CD8-positive, alpha-beta T cell (primary cell): ENCODE measurements at regions of chr3 and their contacts with region 1.

Region 1: DNA sequence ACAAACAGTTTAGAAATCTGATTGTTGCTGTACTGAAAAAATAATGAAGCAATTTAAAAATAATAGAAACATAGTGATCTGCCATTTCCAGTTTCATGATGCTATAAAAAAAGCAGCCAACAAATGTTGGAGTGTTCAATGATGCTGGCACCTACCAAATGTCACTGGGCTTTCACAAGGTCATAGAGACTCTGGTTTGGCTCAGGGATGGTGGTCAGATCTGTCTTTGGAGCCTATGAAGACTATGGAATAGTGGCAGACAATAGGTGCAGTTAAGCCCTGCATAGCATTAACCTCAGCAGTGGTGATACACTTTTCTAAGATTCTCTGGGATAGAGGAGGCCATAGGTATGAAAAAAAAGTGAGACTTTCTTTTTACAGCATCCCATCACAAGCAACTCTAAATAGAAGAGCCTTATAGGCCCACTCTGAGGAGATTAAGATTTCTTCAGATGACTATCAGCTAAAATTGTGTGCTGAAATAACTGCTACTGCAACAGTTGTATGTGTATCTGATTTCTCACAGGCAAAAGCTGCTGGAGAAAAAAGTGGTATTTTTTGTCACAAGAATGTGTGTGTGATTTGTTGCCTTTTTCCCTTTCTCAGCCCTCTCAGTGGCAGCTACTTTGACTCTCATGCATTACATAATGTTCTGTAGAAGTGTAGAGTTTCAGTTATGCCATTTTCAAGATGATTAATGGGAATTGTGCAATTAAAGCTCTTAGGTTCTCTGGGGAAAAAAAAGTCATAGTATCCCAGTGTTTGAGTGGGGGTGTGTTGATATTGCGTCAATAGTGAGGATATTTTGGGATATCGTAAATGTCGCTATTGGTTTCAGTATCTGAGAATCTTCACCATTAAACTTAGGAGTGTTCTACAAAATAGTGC is 137.4 kb downstream of the MBNL1 start:
- DNase-seq: no peak
- ATAC-seq: no peak
- H3K4me3 ChIP-seq: no peak overlapping the region
- H3K4me3 Mint-ChIP-seq: no peak overlapping the region
- H3K27ac ChIP-seq: peak overlapping the region in 1 of 2 experiments; percentile 1
- H3K27ac Mint-ChIP-seq: peak overlapping the region; percentile 69
- H3K4me1 ChIP-seq: peaks cover 51% of the 10 kb centered on the region
- H3K4me1 Mint-ChIP-seq: peaks cover 81% of the 10 kb centered on the region
- H3K27me3 ChIP-seq: no peaks in the 10 kb centered on the region
- H3K27me3 Mint-ChIP-seq: no peaks in the 10 kb centered on the region
- CTCF ChIP-seq: no peak

Region 2: GRCh38 chr3:152331018-152331541 is 75.1 kb before region 1 on chr3:
- CTCF ChIA-PET with region 1: no interaction called
- POLR2A ChIA-PET with region 1: no interaction called
- intact Hi-C with region 1: loop called in 1 of 2 experiments (anchors 5 kb)
- DNase-seq: no peak
- ATAC-seq: no peak
- H3K4me3 ChIP-seq: no peak overlapping the region
- H3K4me3 Mint-ChIP-seq: peak overlapping the region; percentile 6
- H3K27ac ChIP-seq: no peak overlapping the region
- H3K27ac Mint-ChIP-seq: peak overlapping the region; percentile 77
- H3K4me1 ChIP-seq: peaks cover 74% of the 10 kb centered on the region
- H3K4me1 Mint-ChIP-seq: peaks cover 88% of the 10 kb centered on the region
- H3K27me3 ChIP-seq: no peaks in the 10 kb centered on the region
- H3K27me3 Mint-ChIP-seq: no peaks in the 10 kb centered on the region
- CTCF ChIP-seq: no peak

Region 3: GRCh38 chr3:152385761-152386160 is 20.4 kb before region 1 on chr3:
- CTCF ChIA-PET with region 1: no interaction called
- POLR2A ChIA-PET with region 1: no interaction called
- intact Hi-C with region 1: loop called (anchors 2 kb)
- DNase-seq: no peak
- ATAC-seq: no peak
- H3K4me3 ChIP-seq: no peak overlapping the region
- H3K4me3 Mint-ChIP-seq: no peak overlapping the region
- H3K27ac ChIP-seq: peak overlapping the region in 1 of 2 experiments; percentile 1
- H3K27ac Mint-ChIP-seq: peak overlapping the region; percentile 60
- H3K4me1 ChIP-seq: peaks cover 71% of the 10 kb centered on the region
- H3K4me1 Mint-ChIP-seq: peaks cover 84% of the 10 kb centered on the region
- H3K27me3 ChIP-seq: no peaks in the 10 kb centered on the region
- H3K27me3 Mint-ChIP-seq: no peaks in the 10 kb centered on the region
- CTCF ChIP-seq: no peak

Region 4: GRCh38 chr3:152416808-152417580 is 10.8 kb after region 1 on chr3:
- CTCF ChIA-PET with region 1: no interaction called
- POLR2A ChIA-PET with region 1: no interaction called
- intact Hi-C with region 1: loop called in 1 of 2 experiments (anchors 1 kb)
- DNase-seq: no peak
- ATAC-seq: no peak
- H3K4me3 ChIP-seq: no peak overlapping the region
- H3K4me3 Mint-ChIP-seq: no peak overlapping the region
- H3K27ac ChIP-seq: peak overlapping the region in 1 of 2 experiments; percentile 23
- H3K27ac Mint-ChIP-seq: peak overlapping the region; percentile 61
- H3K4me1 ChIP-seq: peaks cover 26% of the 10 kb centered on the region
- H3K4me1 Mint-ChIP-seq: peaks cover 73% of the 10 kb centered on the region
- H3K27me3 ChIP-seq: no peaks in the 10 kb centered on the region
- H3K27me3 Mint-ChIP-seq: no peaks in the 10 kb centered on the region
- CTCF ChIP-seq: no peak

Region 5: GRCh38 chr3:152444029-152444641 is 38.0 kb after region 1 on chr3:
- CTCF ChIA-PET with region 1: interaction called, 3 read pairs
- POLR2A ChIA-PET with region 1: no interaction called
- intact Hi-C with region 1: loop called in 1 of 2 experiments (anchors 5 kb)
- DNase-seq: peak in 2 of 9 experiments; percentile 53 to 70
- ATAC-seq: peak; percentile 46
- H3K4me3 ChIP-seq: no peak overlapping the region
- H3K4me3 Mint-ChIP-seq: peak overlapping the region; percentile 0
- H3K27ac ChIP-seq: no peak overlapping the region
- H3K27ac Mint-ChIP-seq: peak overlapping the region; percentile 55
- H3K4me1 ChIP-seq: peaks cover 55% of the 10 kb centered on the region
- H3K4me1 Mint-ChIP-seq: peaks cover 73% of the 10 kb centered on the region
- H3K27me3 ChIP-seq: no peaks in the 10 kb centered on the region
- H3K27me3 Mint-ChIP-seq: no peaks in the 10 kb centered on the region
- CTCF ChIP-seq: peak; percentile 68